Left lung (tissue), 14 donors: ENCODE measurements at regions of chr1 and their contacts with region 1.

Region 1: DNA sequence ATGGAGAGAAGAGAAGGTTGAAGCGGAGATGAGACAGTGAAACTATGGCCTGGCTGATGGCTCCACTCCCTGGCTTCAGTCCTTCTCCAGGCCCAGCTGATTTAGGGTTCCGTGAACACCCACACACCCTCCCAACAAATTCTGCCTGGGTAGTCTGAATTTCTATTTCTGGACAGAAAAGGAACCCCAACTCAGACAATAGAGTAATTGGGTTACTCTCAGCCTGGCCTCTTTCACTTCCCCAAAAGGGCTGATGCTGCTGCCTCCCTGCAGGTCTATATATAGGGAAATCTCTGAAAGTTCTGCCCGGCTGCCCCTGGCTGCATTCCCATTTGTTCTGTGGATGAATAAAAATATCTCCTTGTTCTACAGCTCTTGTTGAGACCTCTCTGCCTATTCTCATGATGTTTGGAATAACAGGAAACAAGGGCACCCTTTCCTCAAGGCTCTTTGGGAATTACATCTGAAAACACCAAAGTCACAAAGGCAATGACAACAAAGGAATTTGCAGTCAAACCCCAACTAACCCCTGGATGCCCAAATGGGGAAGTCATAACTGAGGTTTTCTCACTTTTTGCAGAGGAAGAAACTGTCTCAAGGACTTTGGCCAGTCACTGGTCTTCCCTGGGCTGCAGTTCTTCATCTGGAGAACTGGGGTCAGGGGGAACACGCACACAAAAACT is 11.4 kb upstream of the ZSCAN20 start:
- DNase-seq: no peak
- ATAC-seq: peak; percentile 60
- H3K4me3 ChIP-seq: no peak overlapping the region
- H3K27ac ChIP-seq: peak overlapping the region in 1 of 2 donors; percentile 53
- H3K4me1 ChIP-seq: peaks cover 0 to 13% of the 10 kb centered on the region in 2 donors
- H3K27me3 ChIP-seq: no peaks in the 10 kb centered on the region
- CTCF ChIP-seq: no peak

Region 2: DNA sequence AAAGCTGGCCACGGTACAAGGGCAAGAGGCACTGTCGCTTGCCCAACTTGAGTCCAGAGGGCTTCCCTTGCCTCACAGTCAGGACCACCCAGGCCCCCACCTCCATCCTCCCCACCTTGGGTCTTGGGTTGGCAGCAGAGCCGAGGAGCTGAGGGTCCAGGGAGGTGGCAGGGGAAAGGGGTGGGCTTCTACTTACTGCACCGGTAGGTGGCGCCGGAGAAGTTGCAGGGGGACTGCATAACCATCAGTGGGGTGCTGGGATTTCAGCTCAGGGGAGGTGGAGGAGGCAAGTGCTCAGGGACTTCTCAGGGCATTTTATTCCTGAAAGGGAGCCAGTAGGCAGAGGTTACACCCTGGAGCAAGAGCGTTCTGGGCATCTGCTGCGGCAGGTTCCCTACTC is 323.3 kb before region 1 on chr1:
- intact Hi-C with region 1: no loop called
- DNase-seq: peak in 1 of 4 donors; percentile 67
- ATAC-seq: peak; percentile 48
- H3K4me3 ChIP-seq: no peak overlapping the region
- H3K27ac ChIP-seq: no peak overlapping the region
- H3K4me1 ChIP-seq: no peaks in the 10 kb centered on the region
- H3K27me3 ChIP-seq: no peaks in the 10 kb centered on the region
- CTCF ChIP-seq: peak; percentile 18 to 21

Region 3: GRCh38 chr1:33219881-33220661 is 241.0 kb before region 1 on chr1:
- intact Hi-C with region 1: loop called in 1 of 2 experiments (anchors 10 kb)
- DNase-seq: no peak
- ATAC-seq: peak; percentile 28
- H3K4me3 ChIP-seq: no peak overlapping the region
- H3K27ac ChIP-seq: no peak overlapping the region
- H3K4me1 ChIP-seq: no peaks in the 10 kb centered on the region
- H3K27me3 ChIP-seq: no peaks in the 10 kb centered on the region
- CTCF ChIP-seq: no peak

Region 4: DNA sequence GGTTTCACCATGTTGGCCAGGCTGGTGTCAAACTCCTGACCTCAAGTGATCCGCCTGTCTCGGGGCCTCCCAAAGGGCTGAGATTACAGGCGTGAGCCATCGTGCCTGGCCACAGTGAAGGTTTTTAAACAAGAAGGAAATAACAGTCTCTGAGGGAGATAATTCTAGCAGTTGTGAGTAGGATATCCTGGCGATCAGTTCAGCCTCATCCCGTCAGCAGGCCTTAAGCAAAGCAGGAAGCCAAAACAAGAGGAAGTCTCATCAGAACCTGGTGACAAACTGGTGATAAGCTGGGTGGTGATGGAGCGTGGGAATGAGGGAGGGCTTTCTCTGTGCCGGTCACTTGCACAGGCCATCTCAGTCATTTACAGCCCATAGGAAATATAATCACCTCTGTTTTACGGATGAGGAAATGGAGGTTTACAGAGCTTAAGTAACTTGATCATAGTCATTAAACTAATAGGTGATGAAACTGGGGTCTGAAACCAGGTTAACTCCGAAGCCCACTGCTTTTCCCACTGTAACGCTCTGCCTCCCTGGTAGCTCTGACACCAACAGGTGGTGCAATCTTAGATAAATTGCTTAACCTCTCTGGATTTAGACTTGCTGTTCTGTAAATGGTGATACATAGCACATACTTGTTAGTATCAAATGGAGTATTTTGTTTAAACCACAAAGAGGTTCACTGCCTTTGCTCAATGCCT is 99.4 kb before region 1 on chr1:
- intact Hi-C with region 1: no loop called
- DNase-seq: peak in 1 of 4 donors; percentile 29
- ATAC-seq: peak; percentile 20
- H3K4me3 ChIP-seq: no peak overlapping the region
- H3K27ac ChIP-seq: peak overlapping the region in 1 of 2 donors; percentile 11
- H3K4me1 ChIP-seq: peaks cover 3 to 32% of the 10 kb centered on the region in 2 donors
- H3K27me3 ChIP-seq: no peaks in the 10 kb centered on the region
- CTCF ChIP-seq: no peak

Region 5: GRCh38 chr1:33575324-33575879 is 114.3 kb after region 1 on chr1:
- intact Hi-C with region 1: no loop called
- DNase-seq: no peak
- ATAC-seq: no peak
- H3K4me3 ChIP-seq: no peak overlapping the region
- H3K27ac ChIP-seq: no peak overlapping the region
- H3K4me1 ChIP-seq: peaks cover 0 to 3% of the 10 kb centered on the region in 2 donors
- H3K27me3 ChIP-seq: no peaks in the 10 kb centered on the region
- CTCF ChIP-seq: no peak